Right lobe of liver (tissue), 6 donors: ENCODE measurements at regions of chr1 and their contacts with region 1.

Region 1: DNA sequence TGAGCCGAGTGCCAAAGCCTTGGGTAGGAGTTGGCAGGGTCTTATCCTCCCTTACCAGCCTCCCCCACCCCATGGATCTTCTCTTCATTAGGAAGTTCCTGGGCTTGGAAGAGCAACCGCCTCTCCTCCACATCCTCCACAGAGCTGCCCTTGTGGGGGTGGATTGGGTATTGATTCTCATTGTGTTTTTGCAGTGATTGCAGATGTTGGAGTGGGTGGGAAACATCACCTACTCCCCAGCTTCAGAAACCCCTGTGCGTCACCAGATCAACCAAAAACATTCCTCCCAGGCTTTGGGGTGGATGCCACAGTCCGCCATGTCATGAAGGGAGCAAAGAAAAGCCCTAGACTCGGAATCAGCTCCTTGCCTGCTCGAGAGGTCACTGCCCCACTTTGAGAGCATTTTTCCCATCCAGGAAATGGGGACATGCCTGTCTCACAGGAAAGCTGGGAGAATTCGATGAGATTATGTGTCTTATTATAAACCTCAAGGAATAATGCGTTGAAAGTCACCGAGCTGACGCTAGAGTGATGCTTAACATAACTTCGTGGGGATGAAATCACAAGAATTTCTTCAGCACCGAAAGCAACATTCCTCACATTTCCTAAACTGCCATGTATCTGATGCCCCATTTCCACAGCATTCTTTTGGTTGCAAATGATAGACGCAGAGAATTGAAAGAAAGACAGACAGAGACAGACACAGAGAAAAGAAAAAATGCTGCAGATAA is 44.7 kb upstream of the ZBTB40 start:
- DNase-seq: no peak
- ATAC-seq: no peak
- H3K4me3 ChIP-seq: no peak overlapping the region
- H3K27ac ChIP-seq: no peak overlapping the region
- H3K4me1 ChIP-seq: no peaks in the 10 kb centered on the region
- H3K27me3 ChIP-seq: no peaks in the 10 kb centered on the region
- CTCF ChIP-seq: no peak
- POLR2A ChIP-seq: no peak

Region 2: DNA sequence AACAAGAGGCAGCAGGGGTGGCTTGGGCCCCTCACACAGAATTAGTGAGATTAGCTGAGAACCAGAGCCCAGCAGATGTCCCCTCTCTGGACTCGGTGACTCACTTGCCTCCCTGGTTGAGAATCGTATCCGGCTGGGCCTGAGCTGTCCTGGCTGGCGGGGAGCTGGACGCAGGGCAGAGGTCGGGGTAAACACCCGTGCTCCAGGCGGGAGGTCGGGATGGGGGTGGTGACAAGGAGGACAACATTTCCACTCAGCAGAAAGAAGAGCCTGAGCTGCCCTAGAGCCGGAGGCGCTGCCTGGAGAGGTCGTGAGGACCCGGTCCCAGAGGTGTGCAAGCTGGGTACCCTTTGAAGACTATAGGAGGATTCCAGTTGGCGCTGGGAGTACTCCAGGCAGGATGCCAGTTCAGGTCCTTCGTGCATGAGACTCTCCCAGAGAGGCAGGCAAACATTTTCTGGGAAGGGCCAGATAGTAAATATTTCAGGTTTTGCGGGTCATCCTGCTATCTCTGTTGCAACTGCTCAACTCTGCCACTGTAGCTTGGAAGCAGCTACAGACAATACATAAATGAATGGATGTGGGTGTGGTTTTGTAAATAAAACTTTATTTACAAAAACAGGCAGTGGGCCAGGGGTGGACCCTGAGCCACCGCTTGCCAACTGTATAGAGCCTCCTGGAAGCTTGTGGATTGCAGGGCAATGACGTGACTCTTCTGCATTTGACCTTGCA is 147.2 kb before region 1 on chr1:
- intact Hi-C with region 1: loop called in 1 of 2 experiments (anchors 10 kb)
- DNase-seq: peak; percentile 75 to 87 (median 86)
- ATAC-seq: peak; percentile 76 to 88 (median 80)
- H3K4me3 ChIP-seq: no peak overlapping the region
- H3K27ac ChIP-seq: no peak overlapping the region
- H3K4me1 ChIP-seq: peaks cover 0 to 25% (median 10%) of the 10 kb centered on the region in 4 donors
- H3K27me3 ChIP-seq: peaks cover 0 to 27% of the 10 kb centered on the region in 2 donors
- CTCF ChIP-seq: no peak
- POLR2A ChIP-seq: no peak

Region 3: GRCh38 chr1:22285549-22286396 is 121.1 kb before region 1 on chr1:
- intact Hi-C with region 1: no loop called
- DNase-seq: no peak
- ATAC-seq: peak in 3 of 4 donors; percentile 10 to 46 (median 38)
- H3K4me3 ChIP-seq: no peak overlapping the region
- H3K27ac ChIP-seq: no peak overlapping the region
- H3K4me1 ChIP-seq: no peaks in the 10 kb centered on the region
- H3K27me3 ChIP-seq: no peaks in the 10 kb centered on the region
- CTCF ChIP-seq: no peak
- POLR2A ChIP-seq: no peak

Region 4: GRCh38 chr1:22582661-22583635 is 176.0 kb after region 1 on chr1:
- intact Hi-C with region 1: no loop called
- DNase-seq: no peak
- ATAC-seq: no peak
- H3K4me3 ChIP-seq: no peak overlapping the region
- H3K27ac ChIP-seq: no peak overlapping the region
- H3K4me1 ChIP-seq: no peaks in the 10 kb centered on the region
- H3K27me3 ChIP-seq: no peaks in the 10 kb centered on the region
- CTCF ChIP-seq: no peak
- POLR2A ChIP-seq: no peak